ENCODE measurements at regions of chr1 and their contacts with region 1.

Region 1: DNA sequence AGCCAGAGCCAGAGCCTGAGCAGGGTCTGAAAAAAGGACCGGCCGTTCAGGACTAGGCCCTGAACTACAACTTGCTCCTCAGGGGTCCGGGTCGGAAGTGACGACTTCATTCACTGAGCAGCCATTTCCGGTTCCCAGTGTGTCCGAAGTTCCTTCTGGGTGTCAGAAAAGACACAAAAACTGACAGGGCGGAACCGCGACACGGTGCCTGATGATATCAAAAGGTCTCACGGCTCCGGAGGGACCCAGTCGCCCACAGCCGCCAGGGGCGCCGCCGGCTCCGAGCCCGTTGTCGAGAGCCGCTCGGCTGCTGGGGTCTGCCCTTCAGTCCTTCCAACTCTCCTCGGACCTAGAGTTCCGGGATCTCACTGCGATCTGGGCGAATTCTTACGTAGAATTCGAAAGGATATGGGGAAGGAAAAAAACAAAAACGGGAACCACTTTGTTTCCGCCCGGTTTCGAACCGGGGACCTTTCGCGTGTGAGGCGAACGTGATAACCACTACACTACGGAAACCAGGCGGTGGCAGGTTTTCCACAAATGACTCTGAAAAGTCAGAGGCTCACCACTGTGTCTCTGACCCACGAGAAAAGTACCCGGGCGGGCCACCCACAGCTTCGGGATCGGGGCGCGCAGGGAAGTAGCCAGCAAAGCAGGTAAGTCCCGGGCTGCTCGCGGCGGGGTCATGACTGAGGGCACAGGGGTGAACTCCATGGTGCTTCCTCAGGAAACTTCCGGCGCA is 31.8 kb upstream of the CFAP126 start:
- DNase-seq: peak; percentile 90
- H3K4me3 ChIP-seq: peak overlapping the region; percentile 96
- H3K27ac ChIP-seq: peak overlapping the region; percentile 95
- H3K27me3 ChIP-seq: no peaks in the 10 kb centered on the region
- CTCF ChIP-seq: peak; percentile 61

Region 2: GRCh38 chr1:161201828-161202725 is 197.4 kb before region 1 on chr1 and contains the start of gene NDUFS2:
- in situ Hi-C with region 1: loop called (anchors 25 kb)
- DNase-seq: peak; percentile 99
- H3K4me3 ChIP-seq: peak within 1 kb of the TSS; percentile 85
- H3K27ac ChIP-seq: peak within 1 kb of the TSS; percentile 93
- H3K27me3 ChIP-seq: no peaks in the 10 kb centered on the region
- CTCF ChIP-seq: peak; percentile 50

Region 3: DNA sequence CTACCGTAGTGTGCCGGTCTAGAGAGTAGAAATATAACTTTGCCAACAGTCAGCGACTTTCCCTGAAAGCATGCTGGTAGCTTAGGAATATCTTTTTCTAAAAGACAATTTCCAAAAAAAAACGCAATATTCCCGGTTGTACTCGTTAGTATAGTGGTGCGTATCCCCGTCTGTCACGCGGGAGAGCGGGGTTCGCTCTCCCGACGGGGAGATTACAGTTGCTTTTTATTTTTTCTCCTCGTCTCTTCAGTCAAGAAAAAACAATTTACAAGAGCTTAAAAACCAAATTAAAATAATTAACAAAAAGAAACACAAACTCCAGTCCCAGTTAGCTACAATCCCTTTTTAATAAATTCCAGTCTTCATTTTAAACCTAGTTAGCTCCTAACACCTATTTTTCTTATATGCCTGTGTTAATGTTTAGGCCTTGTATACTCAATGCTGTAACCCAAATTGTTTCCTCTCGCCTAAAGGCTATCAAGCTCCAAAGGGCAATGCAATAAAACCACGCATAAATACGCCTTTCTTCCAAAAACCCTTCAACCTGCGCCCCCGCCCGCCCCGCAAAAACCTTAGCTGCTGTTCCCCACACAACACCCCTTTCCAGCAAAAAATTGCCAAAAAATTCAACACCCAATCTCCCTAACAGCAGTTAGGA is 132.7 kb after region 1 on chr1:
- in situ Hi-C with region 1: no loop called
- DNase-seq: no peak
- H3K4me3 ChIP-seq: peak overlapping the region; percentile 66
- H3K27ac ChIP-seq: no peak overlapping the region
- H3K27me3 ChIP-seq: no peaks in the 10 kb centered on the region
- CTCF ChIP-seq: no peak

Region 4: DNA sequence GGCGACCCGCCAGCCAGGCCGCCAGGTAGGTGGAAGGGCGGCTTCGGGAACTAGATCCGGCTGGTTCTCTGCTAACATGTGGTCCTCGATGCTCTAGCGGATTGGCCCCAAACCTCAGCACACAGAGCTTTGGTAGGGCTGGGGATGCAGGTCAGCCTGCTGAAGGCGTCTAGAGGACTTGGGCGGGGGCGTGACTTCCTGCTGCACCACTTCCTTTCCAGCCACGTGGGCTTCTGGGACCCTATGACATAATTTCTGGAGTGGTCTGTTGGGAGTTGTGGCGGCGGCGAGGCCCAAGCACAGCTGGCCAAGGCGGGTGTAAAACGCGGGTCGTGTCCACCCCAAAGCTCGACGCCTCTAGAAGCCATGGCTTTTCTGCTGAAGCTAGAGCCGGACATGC is 491.1 kb after region 1 on chr1:
- in situ Hi-C with region 1: no loop called
- DNase-seq: no peak
- H3K4me3 ChIP-seq: no peak overlapping the region
- H3K27ac ChIP-seq: no peak overlapping the region
- H3K27me3 ChIP-seq: no peaks in the 10 kb centered on the region
- CTCF ChIP-seq: no peak